ENCODE measurements at regions of chr12 and their contacts with region 1.

Region 1: DNA sequence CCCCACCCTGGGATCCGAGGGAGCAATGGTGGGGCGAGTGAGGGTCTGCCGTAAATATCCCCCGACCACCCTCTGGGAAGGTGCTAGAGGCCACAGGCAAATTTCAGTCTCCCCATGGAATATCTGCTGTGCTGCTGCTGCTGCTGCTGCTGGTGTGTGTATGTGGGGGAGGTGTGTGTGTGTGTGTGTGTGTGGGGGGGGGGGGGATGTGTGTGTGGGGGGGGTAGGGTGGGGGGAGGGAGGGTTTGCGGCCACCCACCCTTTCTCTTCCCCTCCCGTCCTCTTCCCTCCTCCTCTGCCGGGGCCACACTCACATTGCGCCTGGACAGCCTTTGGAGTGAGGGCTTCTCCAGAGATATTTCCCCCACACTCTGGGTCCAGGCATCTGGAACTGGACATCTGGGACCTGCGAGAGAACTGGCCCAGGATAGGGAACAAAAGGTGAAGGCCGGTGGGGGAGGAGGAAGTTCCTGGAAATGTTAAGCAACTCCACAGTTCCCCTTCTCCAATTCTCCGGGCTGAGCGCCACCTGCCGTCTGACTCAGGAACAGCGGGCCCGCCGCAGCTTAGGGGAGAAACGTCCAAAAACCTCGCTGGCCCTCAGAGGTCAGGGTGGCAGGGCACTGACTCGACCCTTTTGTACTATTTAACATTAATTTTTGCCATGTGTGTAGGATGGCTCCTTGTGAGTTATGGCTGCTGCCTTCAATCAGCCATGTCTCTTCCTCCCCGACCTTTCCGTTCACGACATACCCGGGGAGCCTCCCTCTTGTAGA is at the start of gene C1RL:
- DNase-seq: peak; percentile 92 to 96
- H3K4me3 ChIP-seq: peak within 1 kb of the TSS; percentile 80
- H3K4me3 Mint-ChIP-seq: peak within 1 kb of the TSS; percentile 85
- H3K27ac Mint-ChIP-seq: peak within 1 kb of the TSS; percentile 74
- H3K4me1 ChIP-seq: no peaks in the 10 kb centered on the region
- H3K4me1 Mint-ChIP-seq: peaks cover 12% of the 10 kb centered on the region
- H3K27me3 ChIP-seq: no peaks in the 10 kb centered on the region
- H3K27me3 Mint-ChIP-seq: no peaks in the 10 kb centered on the region
- CTCF ChIP-seq: peak; percentile 98 to 99
- total RNA-seq, gene C1RL: 38.7 and 40.2 TPM in 2 replicates

Region 2: GRCh38 chr12:6919588-6919987 is 189.4 kb before region 1 on chr12:
- CTCF ChIA-PET with region 1: interaction called, 7 read pairs
- POLR2A ChIA-PET with region 1: interaction called, 11 read pairs
- intact Hi-C with region 1: no loop called
- DNase-seq: no peak
- H3K4me3 ChIP-seq: no peak overlapping the region
- H3K4me3 Mint-ChIP-seq: no peak overlapping the region
- H3K27ac Mint-ChIP-seq: no peak overlapping the region
- H3K4me1 ChIP-seq: peaks cover 11% of the 10 kb centered on the region
- H3K4me1 Mint-ChIP-seq: peaks cover 5% of the 10 kb centered on the region
- H3K27me3 ChIP-seq: no peaks in the 10 kb centered on the region
- H3K27me3 Mint-ChIP-seq: no peaks in the 10 kb centered on the region
- CTCF ChIP-seq: no peak

Region 3: GRCh38 chr12:7018350-7019042 is 90.5 kb before region 1 on chr12 and contains the start of gene LPCAT3:
- CTCF ChIA-PET with region 1: interaction called, 9 read pairs
- POLR2A ChIA-PET with region 1: no interaction called
- intact Hi-C with region 1: loop called (anchors 5 kb)
- DNase-seq: peak; percentile 99 to 100
- H3K4me3 ChIP-seq: peak within 1 kb of the TSS; percentile 65
- H3K4me3 Mint-ChIP-seq: peak within 1 kb of the TSS; percentile 88
- H3K27ac Mint-ChIP-seq: peak within 1 kb of the TSS; percentile 72
- H3K4me1 ChIP-seq: peaks cover 19% of the 10 kb centered on the region
- H3K4me1 Mint-ChIP-seq: peaks cover 22% of the 10 kb centered on the region
- H3K27me3 ChIP-seq: no peaks in the 10 kb centered on the region
- H3K27me3 Mint-ChIP-seq: no peaks in the 10 kb centered on the region
- CTCF ChIP-seq: peak; percentile 95 to 96
- total RNA-seq, gene LPCAT3: 142 and 155 TPM in 2 replicates

Region 4: DNA sequence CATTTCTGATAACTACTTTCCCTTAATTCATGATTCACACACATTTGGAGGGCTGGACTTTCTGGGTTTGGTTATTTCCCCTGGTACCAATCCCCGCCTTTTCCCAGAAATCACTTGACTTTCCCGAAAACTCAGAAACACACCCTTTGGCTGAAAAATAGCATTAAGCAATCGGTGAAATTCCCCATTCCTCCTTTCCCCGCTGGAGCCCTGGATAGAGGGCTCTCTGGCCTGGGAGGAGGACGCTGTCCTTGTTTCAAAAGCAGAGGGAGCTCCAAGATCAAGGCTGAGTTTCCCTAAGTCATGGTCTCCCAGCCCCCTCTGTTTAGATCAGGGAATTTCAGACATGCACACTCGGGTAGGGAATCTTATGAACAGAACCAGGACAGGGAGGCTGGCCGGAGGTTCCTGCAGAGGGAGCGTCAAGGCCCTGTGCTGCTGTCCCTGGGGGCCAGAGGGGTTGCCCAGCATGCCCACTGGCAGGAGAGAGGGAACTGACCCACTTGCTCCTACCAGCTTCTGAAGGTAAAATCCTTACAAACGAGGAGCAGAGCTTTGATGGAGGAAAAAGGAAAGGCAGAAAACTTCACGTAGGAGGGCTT is 48.5 kb before region 1 on chr12 and contains the start of gene C1S:
- CTCF ChIA-PET with region 1: interaction called, 26 read pairs
- POLR2A ChIA-PET with region 1: interaction called, 4 read pairs
- intact Hi-C with region 1: loop called (anchors 1 kb)
- DNase-seq: peak; percentile 78 to 81
- H3K4me3 ChIP-seq: no peak within 1 kb of the TSS
- H3K4me3 Mint-ChIP-seq: no peak within 1 kb of the TSS
- H3K27ac Mint-ChIP-seq: peak within 1 kb of the TSS; percentile 38
- H3K4me1 ChIP-seq: peaks cover 20% of the 10 kb centered on the region
- H3K4me1 Mint-ChIP-seq: peaks cover 21% of the 10 kb centered on the region
- H3K27me3 ChIP-seq: no peaks in the 10 kb centered on the region
- H3K27me3 Mint-ChIP-seq: no peaks in the 10 kb centered on the region
- CTCF ChIP-seq: peak; percentile 80 to 86
- total RNA-seq, gene C1S: 5.3 and 6.1 TPM in 2 replicates

Region 5: DNA sequence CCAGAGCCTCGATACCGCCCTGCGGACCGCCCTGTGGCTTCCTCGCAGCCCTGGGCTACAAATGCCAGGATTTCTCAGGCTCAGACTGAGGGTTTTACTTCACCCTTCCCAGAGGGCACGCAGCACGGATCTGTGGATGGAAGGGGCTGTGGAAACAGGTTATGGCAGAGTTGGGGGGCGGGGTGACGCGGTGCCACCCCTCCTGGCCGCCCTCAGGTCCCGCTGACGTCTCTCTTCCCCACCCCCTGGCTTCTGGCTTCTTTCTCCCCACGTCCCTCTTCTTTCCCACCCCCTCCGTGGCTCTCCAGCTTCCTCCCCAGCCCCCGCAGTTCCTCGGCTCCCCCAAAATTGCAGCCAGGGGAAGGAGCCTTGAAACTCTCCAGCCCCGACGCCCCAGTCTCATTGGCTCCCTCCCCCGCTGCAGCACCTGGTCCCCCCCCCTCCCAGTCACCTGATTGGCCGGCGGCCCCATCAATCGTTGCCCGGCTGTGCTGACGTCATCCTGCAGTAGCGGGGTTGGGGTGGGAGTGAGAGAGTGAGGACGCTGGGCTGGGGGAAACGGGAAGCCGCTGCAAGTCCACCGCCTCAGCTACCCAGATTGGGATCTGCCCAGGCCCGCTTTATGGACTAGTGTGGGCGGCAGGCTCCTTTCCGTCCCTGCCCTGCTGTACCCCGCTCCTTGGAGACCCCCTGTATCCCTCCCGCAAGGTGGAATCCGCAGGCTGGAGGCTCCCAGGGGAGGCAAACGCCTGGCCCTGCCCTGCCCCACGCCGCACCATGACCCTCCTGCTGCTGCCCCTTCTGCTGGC is 21.1 kb after region 1 on chr12 and contains the start of gene CLSTN3:
- CTCF ChIA-PET with region 1: interaction called, 5 read pairs
- POLR2A ChIA-PET with region 1: interaction called, 3 read pairs
- intact Hi-C with region 1: loop called (anchors 1 kb)
- DNase-seq: peak; percentile 94 to 95
- H3K4me3 ChIP-seq: peak within 1 kb of the TSS; percentile 70
- H3K4me3 Mint-ChIP-seq: peak within 1 kb of the TSS; percentile 86
- H3K27ac Mint-ChIP-seq: peak within 1 kb of the TSS; percentile 79
- H3K4me1 ChIP-seq: peaks cover 30% of the 10 kb centered on the region
- H3K4me1 Mint-ChIP-seq: peaks cover 35% of the 10 kb centered on the region
- H3K27me3 ChIP-seq: no peaks in the 10 kb centered on the region
- H3K27me3 Mint-ChIP-seq: no peaks in the 10 kb centered on the region
- CTCF ChIP-seq: no peak
- total RNA-seq, gene CLSTN3: 40.2 and 44.3 TPM in 2 replicates